ENCODE measurements at regions of chr5 and their contacts with region 1.

Region 1: DNA sequence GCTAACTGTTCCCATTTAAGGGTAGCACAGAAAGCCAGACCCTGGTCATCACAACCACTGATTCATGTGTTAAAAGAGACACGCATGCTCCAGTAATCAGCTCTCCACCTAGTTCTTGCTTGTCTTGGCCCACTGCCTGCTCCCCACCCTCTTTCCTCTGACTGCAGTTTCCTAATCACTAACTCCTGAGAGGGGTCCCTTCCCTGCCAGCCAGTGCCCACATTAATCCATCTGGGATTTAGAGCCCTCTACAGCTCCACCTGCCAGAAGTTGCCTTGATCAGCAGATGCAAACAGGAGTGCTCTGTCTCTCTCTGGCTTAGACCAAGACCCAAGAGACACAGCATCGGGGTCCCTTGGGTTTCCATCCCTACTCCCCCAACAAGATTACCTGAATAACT is 382.3 kb downstream of the TMEM167A start:
- DNase-seq: no peak
- ATAC-seq: no peak
- H3K4me3 ChIP-seq: no peak overlapping the region
- H3K27ac ChIP-seq: no peak overlapping the region
- H3K4me1 ChIP-seq: no peaks in the 10 kb centered on the region
- H3K27me3 ChIP-seq: no peaks in the 10 kb centered on the region; the same call in 1 of the 2 replicates
- CTCF ChIP-seq: no peak
- POLR2A ChIP-seq: no peak
- RAD21 ChIP-seq: no peak

Region 2: GRCh38 chr5:82345108-82345507 is 349.8 kb before region 1 on chr5:
- CTCF ChIA-PET with region 1: no interaction called
- POLR2A ChIA-PET with region 1: interaction called, 12 read pairs
- dilution Hi-C with region 1: no loop called
- in situ Hi-C with region 1: no loop called
- intact Hi-C with region 1: no loop called
- DNase-seq: no peak
- ATAC-seq: no peak
- H3K4me3 ChIP-seq: no peak overlapping the region
- H3K27ac ChIP-seq: no peak overlapping the region
- H3K4me1 ChIP-seq: peaks cover 18% of the 10 kb centered on the region
- H3K27me3 ChIP-seq: no peaks in the 10 kb centered on the region
- CTCF ChIP-seq: no peak
- POLR2A ChIP-seq: no peak
- RAD21 ChIP-seq: no peak

Region 3: DNA sequence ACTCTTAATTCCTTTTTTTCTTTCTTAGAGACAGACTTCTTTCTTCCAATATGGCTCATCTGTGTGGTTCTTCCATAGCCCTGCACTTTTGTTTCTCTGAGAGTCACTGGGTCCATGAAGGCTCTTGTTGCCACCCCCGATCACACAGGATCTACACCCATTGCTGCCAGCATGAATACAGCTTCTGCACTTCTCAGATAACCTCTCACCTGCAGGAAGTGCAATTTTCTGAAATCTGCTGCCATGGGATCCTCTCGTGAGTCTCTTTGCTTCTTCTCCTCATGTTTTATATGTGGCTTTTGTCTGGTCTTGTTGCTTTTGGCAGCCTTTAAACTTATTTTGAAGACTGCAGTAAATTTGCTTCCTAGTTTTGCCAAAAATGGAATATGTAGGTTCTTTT is 211.1 kb after region 1 on chr5:
- CTCF ChIA-PET with region 1: no interaction called
- POLR2A ChIA-PET with region 1: no interaction called
- dilution Hi-C with region 1: no loop called
- in situ Hi-C with region 1: no loop called
- intact Hi-C with region 1: no loop called
- DNase-seq: no peak
- ATAC-seq: no peak
- H3K4me3 ChIP-seq: no peak overlapping the region
- H3K27ac ChIP-seq: no peak overlapping the region
- H3K4me1 ChIP-seq: no peaks in the 10 kb centered on the region
- H3K27me3 ChIP-seq: no peaks in the 10 kb centered on the region
- CTCF ChIP-seq: no peak
- POLR2A ChIP-seq: no peak
- RAD21 ChIP-seq: no peak

Measured in IMR-90 (cell line).